Naive thymus-derived CD4-positive, alpha-beta T cell (primary cell): ENCODE measurements at regions of chr9 and their contacts with region 1.

Region 1: DNA sequence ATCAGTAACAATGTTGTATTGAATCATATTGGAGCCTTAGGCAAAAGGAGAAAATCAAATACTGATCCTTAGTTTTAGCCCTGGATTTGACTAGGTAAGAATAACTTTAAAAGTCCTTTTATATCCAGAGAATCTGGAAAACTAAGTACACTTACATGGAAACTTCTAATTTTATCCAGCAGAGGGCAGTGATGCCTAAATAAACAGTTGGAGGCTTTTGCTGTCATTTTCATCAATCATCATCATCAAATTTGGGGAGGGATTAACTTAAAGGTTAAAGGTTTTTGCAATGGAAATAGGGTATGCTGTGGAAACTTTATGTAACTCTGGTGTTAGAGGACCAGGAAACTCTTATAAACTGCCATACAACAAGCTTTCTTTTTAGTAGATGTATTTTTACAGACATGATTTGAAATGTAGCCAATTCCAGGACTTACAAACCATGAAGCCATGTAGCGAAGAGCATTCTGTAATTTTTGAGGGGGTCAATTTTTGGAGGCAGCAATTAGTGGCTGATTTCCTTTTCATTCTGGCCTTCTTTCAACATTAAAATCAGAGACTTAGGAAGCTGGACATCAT is 112.7 kb downstream of the OSTF1 start:
- DNase-seq: peak in 7 of 9 donors; percentile 11 to 54 (median 50)
- ATAC-seq: peak; percentile 63
- H3K4me3 ChIP-seq: no peak overlapping the region
- H3K4me3 Mint-ChIP-seq: no peak overlapping the region
- H3K27ac ChIP-seq: no peak overlapping the region
- H3K27ac Mint-ChIP-seq: peak overlapping the region in 1 of 9 donors; percentile 0
- H3K4me1 ChIP-seq: no peaks in the 10 kb centered on the region
- H3K4me1 Mint-ChIP-seq: peaks cover 0 to 10% (median 3%) of the 10 kb centered on the region in 7 donors
- H3K27me3 ChIP-seq: no peaks in the 10 kb centered on the region
- H3K27me3 Mint-ChIP-seq: no peaks in the 10 kb centered on the region

Region 2: GRCh38 chr9:75238311-75238978 is 37.5 kb after region 1 on chr9:
- CTCF ChIA-PET with region 1: interaction called, 5 read pairs
- POLR2A ChIA-PET with region 1: no interaction called
- intact Hi-C with region 1: loop called (anchors 1 kb)
- DNase-seq: peak in 7 of 9 donors; percentile 20 to 67 (median 50)
- ATAC-seq: peak; percentile 88
- H3K4me3 ChIP-seq: no peak overlapping the region
- H3K4me3 Mint-ChIP-seq: no peak overlapping the region
- H3K27ac ChIP-seq: no peak overlapping the region
- H3K27ac Mint-ChIP-seq: no peak overlapping the region
- H3K4me1 ChIP-seq: no peaks in the 10 kb centered on the region
- H3K4me1 Mint-ChIP-seq: peaks cover 0 to 2% (median 0%) of the 10 kb centered on the region in 7 donors
- H3K27me3 ChIP-seq: no peaks in the 10 kb centered on the region
- H3K27me3 Mint-ChIP-seq: peaks cover 0 to 3% (median 0%) of the 10 kb centered on the region in 5 donors

Region 3: DNA sequence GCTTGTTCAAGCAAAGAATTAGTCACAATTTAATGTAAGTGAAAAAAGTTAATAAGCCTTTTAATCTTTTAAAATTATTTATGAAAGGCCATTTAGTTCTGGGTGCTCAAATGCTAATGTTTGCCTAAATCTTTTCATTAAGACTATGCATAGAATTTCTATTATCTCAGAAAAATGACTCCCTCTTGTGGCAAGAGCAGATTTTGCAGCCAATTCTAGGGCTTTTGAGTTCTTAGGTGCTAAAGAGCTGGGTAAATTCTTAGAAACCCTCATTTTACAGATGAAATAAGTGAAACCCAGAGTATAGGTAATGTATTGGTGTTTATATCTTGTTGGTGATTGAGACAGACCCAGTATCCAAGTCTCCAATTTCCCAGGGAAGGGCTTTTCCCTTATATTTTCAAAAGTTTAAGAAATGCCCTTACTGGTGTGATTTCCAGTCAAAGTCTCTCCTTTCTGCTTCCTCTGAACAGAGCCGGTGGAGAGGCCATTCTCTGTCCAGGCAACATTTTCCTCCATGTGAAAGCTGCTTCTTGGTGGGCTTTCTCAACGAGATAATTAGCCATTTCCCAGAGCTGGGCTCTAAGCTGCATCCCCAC is 665.4 kb after region 1 on chr9:
- CTCF ChIA-PET with region 1: no interaction called
- POLR2A ChIA-PET with region 1: no interaction called
- intact Hi-C with region 1: loop called (anchors 1 to 5 kb)
- DNase-seq: peak in 6 of 9 donors; percentile 18 to 61 (median 52)
- ATAC-seq: peak; percentile 61
- H3K4me3 ChIP-seq: no peak overlapping the region
- H3K4me3 Mint-ChIP-seq: no peak overlapping the region
- H3K27ac ChIP-seq: no peak overlapping the region
- H3K27ac Mint-ChIP-seq: no peak overlapping the region
- H3K4me1 ChIP-seq: peaks cover 0 to 18% of the 10 kb centered on the region in 2 donors
- H3K4me1 Mint-ChIP-seq: peaks cover 0 to 33% (median 23%) of the 10 kb centered on the region in 7 donors
- H3K27me3 ChIP-seq: no peaks in the 10 kb centered on the region
- H3K27me3 Mint-ChIP-seq: peaks cover 0 to 4% (median 0%) of the 10 kb centered on the region in 5 donors

Region 4: DNA sequence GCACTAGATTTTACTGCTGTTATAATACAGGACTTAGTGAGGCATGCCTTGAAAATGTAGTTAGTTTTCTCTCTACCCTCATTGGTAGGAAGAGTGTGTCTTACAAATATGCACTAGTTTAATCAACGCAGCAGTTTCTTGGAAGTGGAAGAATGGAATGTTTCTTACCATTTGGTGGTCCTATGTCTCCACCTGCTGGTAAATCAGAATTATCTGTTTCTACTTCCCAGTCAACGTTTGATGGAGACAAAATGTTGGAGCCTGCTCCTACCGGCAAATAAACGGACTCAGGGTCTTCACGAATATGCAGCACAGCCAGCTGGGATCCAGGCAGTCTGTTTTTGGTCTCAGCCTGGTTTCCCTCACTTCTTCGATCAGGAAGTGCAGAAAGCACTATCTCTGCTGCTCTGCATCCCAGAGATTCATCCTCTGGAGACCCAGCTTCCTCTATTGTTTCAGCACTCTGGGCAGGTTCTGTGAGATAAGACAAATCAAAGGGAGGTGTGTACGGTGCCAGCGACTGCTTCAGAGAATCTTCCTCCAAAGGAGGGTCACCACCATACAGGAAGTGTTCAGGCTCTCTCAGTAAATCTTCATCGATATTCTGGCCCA is 1503.7 kb after region 1 on chr9:
- CTCF ChIA-PET with region 1: no interaction called
- POLR2A ChIA-PET with region 1: no interaction called
- intact Hi-C with region 1: loop called in 1 of 2 experiments (anchors 2 kb)
- DNase-seq: peak in 7 of 9 donors; percentile 12 to 55 (median 35)
- ATAC-seq: peak; percentile 63
- H3K4me3 ChIP-seq: no peak overlapping the region
- H3K4me3 Mint-ChIP-seq: no peak overlapping the region
- H3K27ac ChIP-seq: no peak overlapping the region
- H3K27ac Mint-ChIP-seq: no peak overlapping the region
- H3K4me1 ChIP-seq: no peaks in the 10 kb centered on the region
- H3K4me1 Mint-ChIP-seq: peaks cover 0 to 16% (median 1%) of the 10 kb centered on the region in 7 donors
- H3K27me3 ChIP-seq: no peaks in the 10 kb centered on the region
- H3K27me3 Mint-ChIP-seq: peaks cover 35 to 51% (median 40%) of the 10 kb centered on the region in 5 donors

Region 5: GRCh38 chr9:77149879-77150278 is 1948.9 kb after region 1 on chr9:
- CTCF ChIA-PET with region 1: no interaction called
- POLR2A ChIA-PET with region 1: no interaction called
- intact Hi-C with region 1: loop called in 1 of 2 experiments (anchors 2 kb)
- DNase-seq: no peak
- ATAC-seq: no peak
- H3K4me3 ChIP-seq: no peak overlapping the region
- H3K4me3 Mint-ChIP-seq: no peak overlapping the region
- H3K27ac ChIP-seq: no peak overlapping the region
- H3K27ac Mint-ChIP-seq: no peak overlapping the region
- H3K4me1 ChIP-seq: no peaks in the 10 kb centered on the region
- H3K4me1 Mint-ChIP-seq: no peaks in the 10 kb centered on the region
- H3K27me3 ChIP-seq: no peaks in the 10 kb centered on the region
- H3K27me3 Mint-ChIP-seq: peaks cover 10 to 24% (median 18%) of the 10 kb centered on the region in 5 donors